ENCODE measurements at regions of chr1 and their contacts with region 1.

Region 1: DNA sequence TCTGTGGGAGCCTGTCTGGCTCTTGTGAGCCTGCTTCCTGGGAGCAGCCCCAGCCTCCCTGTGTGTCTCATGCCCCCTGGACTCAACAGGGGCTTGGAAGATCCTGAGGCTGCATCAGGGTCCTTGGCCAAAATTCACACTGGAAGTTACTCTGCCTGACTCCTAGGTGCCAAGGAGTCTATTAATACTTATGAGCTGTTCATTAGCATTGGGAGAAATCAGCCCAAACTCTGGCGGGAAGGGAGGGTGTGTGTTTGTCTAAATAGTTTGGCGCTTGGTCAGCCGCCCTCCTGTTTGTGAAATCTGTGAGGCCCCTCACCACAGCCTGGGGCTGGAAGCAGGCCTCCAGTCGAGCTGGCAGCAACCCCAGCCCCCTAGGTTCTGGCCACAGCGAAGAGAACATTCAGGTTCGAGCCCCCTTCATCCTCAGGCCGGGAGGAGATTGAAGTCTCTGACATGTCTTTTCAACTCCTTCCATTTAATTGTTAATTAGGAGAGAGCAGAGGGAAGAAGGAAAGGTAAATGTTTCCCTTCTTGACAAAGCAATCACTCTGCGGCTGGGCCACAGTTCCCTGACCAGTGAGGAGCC is 82.1 kb upstream of the F3 start:
- DNase-seq: peak in 1 of 2 experiments; percentile 55
- H3K4me3 ChIP-seq: peak overlapping the region in 1 of 4 experiments; percentile 28; a peak in 1 of 8 replicates
- H3K27ac ChIP-seq: no peak overlapping the region
- H3K4me1 ChIP-seq: peaks cover 18 to 25% (median 21%) of the 10 kb centered on the region in 4 experiments
- H3K27me3 ChIP-seq: peaks cover 0 to 11% (median 6%) of the 10 kb centered on the region in 4 experiments; a peak in 6 of 7 replicates
- CTCF ChIP-seq: no peak
- EP300 ChIP-seq: no peak
- POLR2A ChIP-seq: no peak
- RAD21 ChIP-seq: no peak

Region 2: DNA sequence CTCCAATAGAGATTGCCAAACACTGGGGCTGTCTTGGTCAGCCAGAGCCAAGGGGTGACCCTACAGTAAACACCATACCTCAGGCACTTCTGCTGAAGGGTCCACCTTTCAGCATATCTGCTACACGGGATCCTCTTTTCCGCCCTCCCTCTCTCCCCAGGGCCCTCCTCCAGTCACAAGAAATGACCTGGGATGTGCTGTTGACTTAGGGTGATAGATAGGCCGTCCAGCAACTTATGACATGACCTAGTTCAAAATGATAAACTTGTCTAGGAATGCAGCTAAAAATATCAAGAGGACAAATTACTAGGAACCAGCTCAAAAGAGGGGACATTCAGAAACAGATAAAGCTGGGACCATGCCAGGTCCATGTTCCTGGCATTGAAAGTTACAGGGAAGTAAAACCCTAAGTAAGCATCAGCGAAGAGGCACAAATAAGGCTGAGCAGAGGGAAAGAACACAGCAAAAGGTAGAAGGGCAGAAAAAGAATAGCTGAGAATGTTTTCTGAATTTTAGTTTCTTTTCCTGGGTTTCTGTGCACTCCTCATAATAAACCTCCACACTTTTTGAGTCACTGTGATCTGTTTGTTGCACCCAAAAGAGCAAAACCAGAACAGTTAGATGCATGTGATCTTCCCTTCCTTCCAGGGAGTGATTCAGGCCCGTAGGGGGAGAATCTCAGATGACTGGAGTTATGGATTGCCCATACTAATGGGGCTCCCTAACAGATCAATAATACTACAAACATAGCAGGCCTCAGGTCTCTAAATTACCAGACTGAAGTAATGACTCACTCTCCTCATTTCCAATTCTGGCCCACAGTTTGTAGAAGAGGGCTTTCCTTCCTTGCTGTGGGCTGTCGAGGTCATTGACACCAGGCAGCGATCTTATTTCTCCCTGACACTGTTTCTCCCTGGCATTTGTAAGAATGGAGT is 33.2 kb before region 1 on chr1:
- CTCF ChIA-PET with region 1: interaction called, 10 read pairs
- POLR2A ChIA-PET with region 1: no interaction called
- DNase-seq: peak in 1 of 2 experiments; percentile 16
- H3K4me3 ChIP-seq: no peak overlapping the region
- H3K27ac ChIP-seq: no peak overlapping the region
- H3K4me1 ChIP-seq: no peaks in the 10 kb centered on the region; a peak in 1 of 7 replicates
- H3K27me3 ChIP-seq: no peaks in the 10 kb centered on the region
- CTCF ChIP-seq: no peak
- EP300 ChIP-seq: no peak
- POLR2A ChIP-seq: no peak
- RAD21 ChIP-seq: no peak

Region 3: DNA sequence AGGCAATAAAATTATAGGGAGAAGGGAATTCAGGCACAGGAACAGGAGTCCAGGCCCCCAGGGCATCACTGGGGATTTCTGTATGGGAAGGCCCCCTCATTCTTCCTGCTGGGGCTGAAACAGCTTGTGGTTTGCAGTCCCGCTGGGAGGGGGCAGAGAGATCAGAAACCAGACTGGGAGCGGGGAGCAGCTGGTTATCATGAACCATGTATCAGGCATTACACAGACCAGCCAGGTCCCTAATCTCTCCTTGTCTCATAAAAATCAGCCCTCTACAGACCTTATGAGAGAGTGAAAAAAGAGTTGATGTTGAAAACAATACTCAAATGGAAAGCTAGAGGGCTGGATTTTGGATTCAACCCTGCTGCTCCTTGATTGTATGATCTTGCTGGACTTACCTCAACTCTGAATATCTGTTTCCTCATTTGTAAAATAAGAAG is 11.3 kb after region 1 on chr1:
- CTCF ChIA-PET with region 1: interaction called, 14 read pairs
- POLR2A ChIA-PET with region 1: interaction called, 4 read pairs
- DNase-seq: no peak
- H3K4me3 ChIP-seq: no peak overlapping the region
- H3K27ac ChIP-seq: no peak overlapping the region
- H3K4me1 ChIP-seq: peaks cover 0 to 6% (median 3%) of the 10 kb centered on the region in 4 experiments; a peak in 3 of 7 replicates
- H3K27me3 ChIP-seq: no peaks in the 10 kb centered on the region
- CTCF ChIP-seq: no peak
- EP300 ChIP-seq: no peak
- POLR2A ChIP-seq: no peak
- RAD21 ChIP-seq: no peak

Region 4: GRCh38 chr1:94783342-94784264 is 159.9 kb after region 1 on chr1:
- CTCF ChIA-PET with region 1: no interaction called
- POLR2A ChIA-PET with region 1: no interaction called
- DNase-seq: no peak
- H3K4me3 ChIP-seq: no peak overlapping the region
- H3K27ac ChIP-seq: no peak overlapping the region
- H3K4me1 ChIP-seq: peaks cover 0 to 3% (median 0%) of the 10 kb centered on the region in 4 experiments; a peak in 1 of 7 replicates
- H3K27me3 ChIP-seq: no peaks in the 10 kb centered on the region
- CTCF ChIP-seq: no peak
- EP300 ChIP-seq: no peak
- POLR2A ChIP-seq: no peak
- RAD21 ChIP-seq: no peak

Measured in H1 (cell line).